Endothelial cell of umbilical vein (primary cell): ENCODE measurements at regions of chr5 and their contacts with region 1.

Region 1: GRCh38 chr5:107673368-107674136 is 2.8 kb upstream of the EFNA5 start:
- DNase-seq: peak; percentile 87
- H3K4me3 ChIP-seq: peak overlapping the region; percentile 40 to 78 (median 45)
- H3K27ac ChIP-seq: peak overlapping the region; percentile 63
- H3K4me1 ChIP-seq: peaks cover 2% of the 10 kb centered on the region
- H3K27me3 ChIP-seq: no peaks in the 10 kb centered on the region
- CTCF ChIP-seq: peak; percentile 96 to 97
- POLR2A ChIP-seq: no peak

Region 2: DNA sequence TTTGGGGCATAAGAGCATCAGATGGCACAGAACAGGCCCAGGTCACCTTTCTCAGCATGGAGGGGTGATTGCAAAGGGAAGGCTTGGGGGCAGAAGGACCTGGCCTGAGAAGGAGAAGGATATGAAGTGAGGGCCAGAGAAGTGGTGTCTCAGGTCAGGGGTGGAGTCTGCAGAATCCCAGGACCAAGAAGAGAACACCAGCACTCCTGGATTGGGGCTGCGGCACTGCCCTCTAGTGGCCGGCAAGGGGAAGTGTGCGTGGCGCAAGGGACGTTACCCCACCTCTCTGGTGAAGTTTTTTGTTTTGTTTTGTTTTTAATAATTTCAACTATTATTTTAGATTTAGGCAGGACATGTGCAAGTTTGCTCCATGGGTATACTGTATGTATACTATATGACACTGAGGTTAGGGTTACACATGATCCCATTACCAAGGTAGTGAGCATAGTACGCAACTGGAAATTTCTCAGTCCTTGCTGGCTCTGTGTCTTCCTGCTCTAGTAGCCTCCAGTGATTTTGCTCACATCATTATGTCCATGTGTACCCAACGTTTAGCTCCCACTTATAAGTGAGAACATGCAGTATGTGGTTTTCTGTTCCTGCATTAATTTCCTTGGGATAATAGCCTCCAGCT is 1551.5 kb before region 1 on chr5:
- CTCF ChIA-PET with region 1: interaction called, 7 read pairs
- POLR2A ChIA-PET with region 1: no interaction called
- dilution Hi-C with region 1: no loop called
- intact Hi-C with region 1: loop called (anchors 1 kb)
- DNase-seq: no peak
- H3K4me3 ChIP-seq: no peak overlapping the region
- H3K27ac ChIP-seq: no peak overlapping the region
- H3K4me1 ChIP-seq: no peaks in the 10 kb centered on the region
- H3K27me3 ChIP-seq: no peaks in the 10 kb centered on the region
- CTCF ChIP-seq: peak; percentile 60 to 70
- POLR2A ChIP-seq: no peak

Region 3: GRCh38 chr5:106454651-106455415 is 1218.7 kb before region 1 on chr5:
- CTCF ChIA-PET with region 1: no interaction called
- POLR2A ChIA-PET with region 1: no interaction called
- dilution Hi-C with region 1: no loop called
- intact Hi-C with region 1: loop called (anchors 1 kb)
- DNase-seq: peak; percentile 72
- H3K4me3 ChIP-seq: no peak overlapping the region
- H3K27ac ChIP-seq: no peak overlapping the region
- H3K4me1 ChIP-seq: no peaks in the 10 kb centered on the region
- H3K27me3 ChIP-seq: no peaks in the 10 kb centered on the region
- CTCF ChIP-seq: peak; percentile 46 to 62
- POLR2A ChIP-seq: no peak

Region 4: DNA sequence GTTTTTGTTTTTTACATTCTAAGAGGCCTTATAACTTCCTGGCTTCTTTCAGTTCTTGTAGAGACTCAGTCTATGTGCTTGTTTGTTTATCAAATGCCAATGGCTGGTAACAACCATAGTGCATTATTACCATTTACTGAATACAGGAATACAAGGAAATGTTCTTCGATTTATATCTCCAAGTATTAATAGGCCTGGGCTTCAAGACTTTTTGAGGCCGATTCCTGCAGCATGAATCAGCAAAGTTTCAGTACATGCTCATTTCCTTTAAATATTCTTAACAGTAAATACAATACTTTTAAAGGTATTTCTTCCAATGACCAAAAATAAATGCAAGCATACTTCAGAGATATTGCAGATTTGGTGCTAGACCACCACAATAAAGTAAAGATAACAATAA is 538.2 kb before region 1 on chr5:
- CTCF ChIA-PET with region 1: interaction called, 3 read pairs
- POLR2A ChIA-PET with region 1: no interaction called
- dilution Hi-C with region 1: no loop called
- intact Hi-C with region 1: loop called (anchors 5 kb)
- DNase-seq: peak; percentile 82
- H3K4me3 ChIP-seq: no peak overlapping the region
- H3K27ac ChIP-seq: peak overlapping the region; percentile 76
- H3K4me1 ChIP-seq: peaks cover 23% of the 10 kb centered on the region
- H3K27me3 ChIP-seq: no peaks in the 10 kb centered on the region
- CTCF ChIP-seq: no peak
- POLR2A ChIP-seq: no peak

Region 5: DNA sequence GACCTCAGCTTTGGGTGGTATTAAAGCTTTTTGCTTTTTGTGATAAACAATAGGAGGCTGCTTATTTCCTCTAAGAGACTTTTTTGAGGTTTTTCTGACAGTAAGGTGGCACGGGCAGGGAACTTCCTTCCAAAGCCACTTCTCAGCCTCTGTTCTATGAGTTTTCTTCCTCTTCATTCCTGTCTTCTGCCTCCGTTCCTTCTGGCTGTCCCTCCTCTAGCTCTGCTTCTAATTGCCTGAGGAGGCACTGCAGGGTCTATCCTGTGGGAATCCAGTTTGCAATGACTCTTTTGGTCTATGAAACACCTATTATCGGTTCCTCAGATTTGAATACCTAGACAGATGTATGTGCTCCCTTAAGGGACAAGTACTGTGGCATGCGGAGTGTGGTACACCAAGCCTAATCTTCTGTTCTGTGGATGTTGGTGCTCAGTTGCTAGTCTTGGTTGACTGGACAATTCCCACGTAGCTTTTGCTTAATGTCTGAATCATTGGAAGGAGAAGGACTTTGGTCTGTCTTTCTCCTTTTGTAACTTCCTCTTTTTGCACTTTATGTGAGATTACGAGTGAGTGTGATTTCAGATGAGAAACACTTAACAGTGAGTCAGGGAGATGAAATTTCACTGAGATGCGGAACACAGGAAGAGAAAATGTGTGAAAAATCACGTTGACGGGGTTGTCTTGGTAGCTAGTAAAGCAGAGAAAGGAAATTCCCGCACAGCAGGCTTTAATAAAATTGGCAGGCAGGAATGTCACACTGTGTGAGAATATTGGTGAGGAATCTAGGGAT is 308.0 kb before region 1 on chr5:
- CTCF ChIA-PET with region 1: no interaction called
- POLR2A ChIA-PET with region 1: no interaction called
- dilution Hi-C with region 1: no loop called
- intact Hi-C with region 1: loop called (anchors 5 kb)
- DNase-seq: peak; percentile 55
- H3K4me3 ChIP-seq: no peak overlapping the region
- H3K27ac ChIP-seq: no peak overlapping the region
- H3K4me1 ChIP-seq: no peaks in the 10 kb centered on the region
- H3K27me3 ChIP-seq: no peaks in the 10 kb centered on the region
- CTCF ChIP-seq: no peak
- POLR2A ChIP-seq: no peak

Region 6: DNA sequence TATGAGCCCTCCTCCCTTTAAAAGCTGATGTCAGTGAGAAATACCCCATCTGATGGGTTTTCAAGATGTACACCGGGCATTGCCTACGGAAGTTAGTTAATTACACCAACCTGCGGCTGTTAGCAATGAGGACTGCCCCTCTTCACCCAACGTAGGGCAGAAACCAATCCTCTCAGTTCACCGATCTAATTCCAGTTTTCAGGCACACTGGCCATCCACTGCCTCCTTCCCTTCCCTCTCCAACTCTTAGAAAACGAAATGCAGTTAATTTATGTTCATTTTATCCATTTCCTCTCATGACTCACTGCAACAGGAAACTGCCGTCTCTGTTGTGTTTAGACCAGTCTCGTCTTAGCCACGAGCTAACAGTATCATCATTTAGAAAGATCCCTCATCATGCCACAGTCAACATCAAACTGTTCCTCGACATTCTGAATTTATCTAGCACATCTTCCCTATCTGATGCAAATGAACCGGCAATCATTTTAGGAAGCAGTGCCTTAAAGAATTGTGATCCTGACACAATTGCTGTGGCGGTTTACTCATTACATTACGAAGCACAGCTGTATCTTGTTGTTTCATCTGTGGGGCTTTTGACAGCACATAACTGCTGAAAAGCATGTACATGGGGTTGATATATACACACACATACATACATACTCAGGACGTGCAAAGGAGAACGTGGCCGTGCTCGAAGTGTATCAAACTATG is 171.4 kb before region 1 on chr5:
- CTCF ChIA-PET with region 1: no interaction called
- POLR2A ChIA-PET with region 1: no interaction called
- dilution Hi-C with region 1: no loop called
- intact Hi-C with region 1: loop called (anchors 1 kb)
- DNase-seq: peak; percentile 93
- H3K4me3 ChIP-seq: peak overlapping the region; percentile 43 to 90 (median 59)
- H3K27ac ChIP-seq: peak overlapping the region; percentile 97
- H3K4me1 ChIP-seq: peaks cover 24% of the 10 kb centered on the region
- H3K27me3 ChIP-seq: no peaks in the 10 kb centered on the region
- CTCF ChIP-seq: no peak
- POLR2A ChIP-seq: peak; percentile 86

Region 7: DNA sequence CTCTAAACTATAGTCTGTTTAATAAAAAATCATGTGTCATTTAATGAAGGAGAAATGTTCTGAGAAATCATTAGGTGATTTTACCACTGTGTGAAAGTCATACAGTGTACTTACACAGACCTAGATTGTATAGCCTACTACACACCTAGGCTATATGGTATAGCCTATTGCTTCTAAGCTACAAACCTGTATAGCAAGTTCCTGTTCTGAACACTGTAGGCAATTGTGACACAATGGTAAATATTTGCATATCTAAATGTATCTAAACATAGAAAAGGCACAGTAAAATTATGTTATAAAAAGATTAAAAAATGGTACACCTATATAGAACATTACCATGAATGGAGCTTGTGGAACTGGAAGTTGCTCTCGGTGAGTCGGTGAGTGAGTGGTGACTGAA is 43.4 kb before region 1 on chr5:
- CTCF ChIA-PET with region 1: no interaction called
- POLR2A ChIA-PET with region 1: no interaction called
- dilution Hi-C with region 1: no loop called
- intact Hi-C with region 1: no loop called
- DNase-seq: no peak
- H3K4me3 ChIP-seq: no peak overlapping the region
- H3K27ac ChIP-seq: no peak overlapping the region
- H3K4me1 ChIP-seq: peaks cover 4% of the 10 kb centered on the region
- H3K27me3 ChIP-seq: no peaks in the 10 kb centered on the region
- CTCF ChIP-seq: no peak
- POLR2A ChIP-seq: no peak